Sigmoid colon (tissue), 7 donors: ENCODE measurements at regions of chr1 and their contacts with region 1.

Region 1: DNA sequence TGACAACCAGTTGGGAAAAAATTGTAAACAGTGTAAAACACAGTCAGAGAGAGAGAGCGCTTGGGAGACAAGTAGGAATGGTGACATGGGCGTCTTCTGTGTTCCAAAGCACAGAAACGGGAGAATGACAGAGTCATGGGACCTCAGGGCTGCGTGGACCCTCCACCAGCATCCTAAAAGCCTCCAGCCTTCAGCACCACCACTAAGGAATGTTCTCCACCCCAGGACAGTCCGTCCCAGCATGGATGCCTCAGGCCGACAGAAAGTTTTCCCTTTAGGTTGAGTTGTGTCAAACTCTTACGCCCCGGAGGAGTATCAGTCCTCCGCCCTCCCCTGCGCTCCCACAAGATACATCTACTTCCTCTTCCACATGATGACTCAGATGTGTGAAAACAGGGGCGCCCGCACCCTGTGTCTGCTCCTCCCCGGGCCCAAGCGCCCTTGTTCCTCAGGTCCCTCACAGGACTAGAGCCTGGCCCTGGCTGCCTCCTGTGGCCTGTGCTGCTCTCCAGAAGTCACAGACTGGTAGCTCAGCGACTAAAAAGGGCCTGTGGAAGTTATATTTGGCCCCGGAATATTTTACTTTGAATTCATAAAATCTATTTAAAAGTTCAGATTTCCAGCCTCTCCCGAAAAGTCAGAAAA is 63.9 kb upstream of the EFHD2 start:
- DNase-seq: peak; percentile 77
- H3K4me3 ChIP-seq: no peak overlapping the region
- H3K27ac ChIP-seq: no peak overlapping the region
- H3K4me1 ChIP-seq: peaks cover 0 to 42% (median 39%) of the 10 kb centered on the region in 4 donors
- H3K27me3 ChIP-seq: no peaks in the 10 kb centered on the region
- CTCF ChIP-seq: no peak
- EP300 ChIP-seq: no peak
- POLR2A ChIP-seq: no peak

Region 2: DNA sequence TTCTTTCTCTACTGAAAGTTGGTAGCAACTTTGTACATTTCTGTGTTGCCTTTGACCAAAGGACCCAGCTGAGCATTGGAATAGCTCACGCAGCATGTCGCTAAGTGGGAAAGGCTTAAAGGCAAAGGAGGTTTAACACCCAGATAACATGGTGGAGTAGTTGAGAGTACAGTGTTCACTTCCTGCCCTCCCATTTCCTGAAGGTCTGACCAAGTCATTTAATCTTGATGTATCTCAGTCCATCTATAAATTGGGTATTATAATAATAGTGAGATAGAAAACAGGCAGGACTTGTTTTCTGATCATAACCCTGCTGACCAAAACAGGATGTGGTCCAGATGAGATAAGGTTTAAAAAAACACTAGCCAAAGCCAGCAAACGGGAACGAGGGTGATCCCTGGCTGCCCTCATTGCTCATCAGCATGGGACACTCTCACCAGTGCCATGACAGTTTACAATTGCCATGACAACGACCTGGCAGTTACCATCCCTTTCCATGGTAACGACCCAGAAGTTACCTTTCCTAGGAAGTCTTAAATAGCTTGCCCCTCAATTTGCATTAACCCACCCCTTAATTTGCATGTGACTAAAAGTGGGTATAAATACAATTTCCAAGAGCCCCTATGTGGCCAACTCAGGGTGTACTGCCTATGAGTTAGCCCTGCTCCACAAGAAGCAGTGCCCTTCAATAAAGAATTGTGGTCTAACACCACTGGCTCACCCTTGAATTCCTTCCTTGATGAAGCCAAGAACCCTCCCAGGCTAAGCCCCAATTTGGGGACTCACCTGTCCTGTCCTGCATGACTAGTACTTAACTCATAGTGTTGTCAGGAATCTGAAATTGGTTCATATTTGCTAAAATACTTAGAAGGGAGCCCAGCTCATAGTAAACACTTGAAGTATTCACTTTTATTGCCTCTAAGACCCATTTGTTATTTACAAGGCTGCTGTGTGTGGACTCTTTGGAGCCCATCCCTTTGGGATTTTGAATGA is 127.2 kb before region 1 on chr1:
- intact Hi-C with region 1: no loop called
- DNase-seq: peak; percentile 54
- H3K4me3 ChIP-seq: no peak overlapping the region
- H3K27ac ChIP-seq: no peak overlapping the region
- H3K4me1 ChIP-seq: peaks cover 0 to 31% (median 24%) of the 10 kb centered on the region in 4 donors
- H3K27me3 ChIP-seq: no peaks in the 10 kb centered on the region
- CTCF ChIP-seq: no peak
- EP300 ChIP-seq: no peak
- POLR2A ChIP-seq: no peak

Region 3: GRCh38 chr1:15409388-15410222 is 63.8 kb after region 1 on chr1 and contains the start of gene EFHD2:
- intact Hi-C with region 1: loop called (anchors 2 kb)
- DNase-seq: peak; percentile 92
- H3K4me3 ChIP-seq: peak within 1 kb of the TSS; percentile 73 to 97 (median 92)
- H3K27ac ChIP-seq: peak within 1 kb of the TSS; percentile 79 to 88 (median 82)
- H3K4me1 ChIP-seq: peaks cover 0 to 61% (median 50%) of the 10 kb centered on the region in 4 donors
- H3K27me3 ChIP-seq: no peaks in the 10 kb centered on the region
- CTCF ChIP-seq: no peak
- EP300 ChIP-seq: no peak
- POLR2A ChIP-seq: no peak
- total RNA-seq, gene EFHD2: 32.7 to 47.4 (median 37.3) TPM

Region 4: GRCh38 chr1:15430787-15431570 is 85.1 kb after region 1 on chr1:
- intact Hi-C with region 1: loop called (anchors 5 kb)
- DNase-seq: no peak
- H3K4me3 ChIP-seq: no peak overlapping the region
- H3K27ac ChIP-seq: no peak overlapping the region
- H3K4me1 ChIP-seq: peaks cover 0 to 46% (median 29%) of the 10 kb centered on the region in 4 donors
- H3K27me3 ChIP-seq: no peaks in the 10 kb centered on the region
- CTCF ChIP-seq: peak; percentile 91 to 98 (median 97)
- EP300 ChIP-seq: no peak
- POLR2A ChIP-seq: no peak

Region 5: GRCh38 chr1:15598436-15598835 is 252.6 kb after region 1 on chr1:
- intact Hi-C with region 1: no loop called
- DNase-seq: no peak
- H3K4me3 ChIP-seq: no peak overlapping the region
- H3K27ac ChIP-seq: no peak overlapping the region
- H3K4me1 ChIP-seq: peaks cover 0 to 15% (median 14%) of the 10 kb centered on the region in 4 donors
- H3K27me3 ChIP-seq: no peaks in the 10 kb centered on the region
- CTCF ChIP-seq: no peak
- EP300 ChIP-seq: no peak
- POLR2A ChIP-seq: no peak